Cardiac septum (tissue), 1 donor: ENCODE measurements at regions of chr1 and their contacts with region 1.

Region 1: GRCh38 chr1:30085811-30086770 is 637.3 kb downstream of the MATN1 start:
- DNase-seq: no peak

Region 2: DNA sequence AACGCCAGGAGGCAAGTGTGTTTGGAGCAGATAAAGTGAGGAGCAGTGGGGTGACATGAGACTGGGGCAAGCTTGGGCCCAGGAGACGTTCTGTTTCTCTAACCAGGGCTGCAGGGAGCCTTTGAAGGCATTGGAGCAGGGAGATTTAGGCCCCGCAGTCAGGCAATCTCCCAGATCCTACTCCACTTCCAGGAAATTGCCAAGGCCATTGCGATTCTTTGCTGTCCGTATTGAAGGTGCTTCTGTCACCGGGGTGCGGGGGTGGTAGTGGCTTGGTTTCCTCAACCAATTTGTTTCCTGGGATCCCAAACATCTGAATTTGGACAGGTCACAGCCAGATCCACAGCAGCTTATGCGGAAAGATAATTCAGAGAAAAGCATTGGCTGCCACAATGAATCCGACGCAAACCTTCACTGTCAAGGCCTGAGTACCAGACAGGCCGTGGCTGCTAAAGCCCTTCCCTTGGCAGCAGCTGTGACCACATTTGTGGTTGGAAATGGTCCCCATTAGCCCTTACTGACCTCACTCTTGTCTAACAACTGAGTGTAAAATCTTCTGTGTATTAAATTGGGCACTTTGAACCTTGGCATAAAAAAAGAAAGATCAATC is 464.2 kb before region 1 on chr1:
- intact Hi-C with region 1: no loop called
- DNase-seq: no peak

Region 3: DNA sequence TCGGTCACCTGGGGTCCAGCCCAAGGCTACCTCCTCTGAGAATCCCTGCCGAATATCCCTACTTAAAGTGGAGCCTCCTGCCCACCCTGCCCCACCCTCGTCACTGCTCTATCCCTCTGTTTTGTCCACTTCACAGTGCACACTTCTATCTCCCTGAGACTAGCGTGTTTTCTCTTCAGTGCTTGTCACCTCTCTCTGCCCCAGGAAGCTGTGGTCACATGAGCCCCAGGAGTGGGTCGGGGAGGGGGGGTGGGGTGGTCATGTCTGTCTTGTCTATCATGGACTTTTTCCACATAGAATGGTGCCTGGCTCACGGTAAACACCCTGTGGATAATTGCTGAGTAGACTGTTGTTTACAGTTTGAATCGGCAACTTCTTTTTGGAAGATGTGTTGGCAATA is 176.1 kb before region 1 on chr1:
- intact Hi-C with region 1: loop called (anchors 5 kb)
- DNase-seq: no peak